Ascending aorta (tissue), 2 donors: ENCODE measurements at regions of chr2 and their contacts with region 1.

Region 1: GRCh38 chr2:233711312-233712008 is 1.2 kb upstream of the UGT1A5 start:
- DNase-seq: peak in 1 of 2 donors; percentile 75
- H3K4me3 ChIP-seq: no peak overlapping the region
- H3K27ac ChIP-seq: no peak overlapping the region
- H3K4me1 ChIP-seq: no peaks in the 10 kb centered on the region
- H3K27me3 ChIP-seq: no peaks in the 10 kb centered on the region
- CTCF ChIP-seq: peak; percentile 44 to 66 (median 56)

Region 2: GRCh38 chr2:233449081-233449901 is 262.2 kb before region 1 on chr2:
- intact Hi-C with region 1: loop called (anchors 5 kb)
- DNase-seq: peak; percentile 7 to 63
- H3K4me3 ChIP-seq: no peak overlapping the region
- H3K27ac ChIP-seq: no peak overlapping the region
- H3K4me1 ChIP-seq: no peaks in the 10 kb centered on the region
- H3K27me3 ChIP-seq: no peaks in the 10 kb centered on the region
- CTCF ChIP-seq: peak; percentile 18 to 73 (median 54)

Region 3: DNA sequence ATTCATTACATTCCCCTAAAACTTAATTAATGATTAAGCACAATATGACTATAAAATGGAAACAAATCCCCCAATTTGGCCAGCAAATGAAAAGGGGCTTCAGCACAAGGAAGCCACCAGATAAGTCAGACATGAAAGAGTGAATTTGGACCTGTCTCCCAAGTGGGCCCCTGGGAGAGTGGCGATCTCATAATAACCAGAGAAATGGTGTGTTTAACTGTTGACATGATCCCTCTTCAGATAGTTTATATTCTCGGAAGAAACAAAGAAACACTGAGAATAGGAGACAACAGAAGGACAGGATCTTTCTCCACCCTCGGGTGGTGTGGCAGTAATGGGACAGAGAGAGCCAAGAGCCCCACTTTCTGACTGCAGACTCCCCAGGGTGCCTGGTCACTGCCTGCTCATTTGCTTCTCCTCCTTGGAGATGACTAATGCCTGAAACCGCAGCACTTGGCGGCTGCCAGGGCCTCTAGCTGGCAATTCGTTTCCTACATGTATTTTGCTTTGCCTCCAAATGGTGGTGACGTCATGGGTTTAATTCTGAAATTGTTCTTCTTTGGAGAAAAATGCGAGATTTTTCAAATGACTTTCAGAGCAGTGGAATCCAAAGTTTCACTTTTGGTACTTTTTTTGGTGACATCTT is 292.6 kb after region 1 on chr2:
- intact Hi-C with region 1: no loop called
- DNase-seq: no peak
- H3K4me3 ChIP-seq: no peak overlapping the region
- H3K27ac ChIP-seq: no peak overlapping the region
- H3K4me1 ChIP-seq: no peaks in the 10 kb centered on the region
- H3K27me3 ChIP-seq: no peaks in the 10 kb centered on the region
- CTCF ChIP-seq: no peak

Region 4: GRCh38 chr2:234368861-234369261 is 657.4 kb after region 1 on chr2:
- intact Hi-C with region 1: no loop called
- DNase-seq: no peak
- H3K4me3 ChIP-seq: no peak overlapping the region
- H3K27ac ChIP-seq: no peak overlapping the region
- H3K4me1 ChIP-seq: no peaks in the 10 kb centered on the region
- H3K27me3 ChIP-seq: no peaks in the 10 kb centered on the region
- CTCF ChIP-seq: no peak